Naive thymus-derived CD4-positive, alpha-beta T cell (primary cell): ENCODE measurements at regions of chr16 and their contacts with region 1.

Region 1: DNA sequence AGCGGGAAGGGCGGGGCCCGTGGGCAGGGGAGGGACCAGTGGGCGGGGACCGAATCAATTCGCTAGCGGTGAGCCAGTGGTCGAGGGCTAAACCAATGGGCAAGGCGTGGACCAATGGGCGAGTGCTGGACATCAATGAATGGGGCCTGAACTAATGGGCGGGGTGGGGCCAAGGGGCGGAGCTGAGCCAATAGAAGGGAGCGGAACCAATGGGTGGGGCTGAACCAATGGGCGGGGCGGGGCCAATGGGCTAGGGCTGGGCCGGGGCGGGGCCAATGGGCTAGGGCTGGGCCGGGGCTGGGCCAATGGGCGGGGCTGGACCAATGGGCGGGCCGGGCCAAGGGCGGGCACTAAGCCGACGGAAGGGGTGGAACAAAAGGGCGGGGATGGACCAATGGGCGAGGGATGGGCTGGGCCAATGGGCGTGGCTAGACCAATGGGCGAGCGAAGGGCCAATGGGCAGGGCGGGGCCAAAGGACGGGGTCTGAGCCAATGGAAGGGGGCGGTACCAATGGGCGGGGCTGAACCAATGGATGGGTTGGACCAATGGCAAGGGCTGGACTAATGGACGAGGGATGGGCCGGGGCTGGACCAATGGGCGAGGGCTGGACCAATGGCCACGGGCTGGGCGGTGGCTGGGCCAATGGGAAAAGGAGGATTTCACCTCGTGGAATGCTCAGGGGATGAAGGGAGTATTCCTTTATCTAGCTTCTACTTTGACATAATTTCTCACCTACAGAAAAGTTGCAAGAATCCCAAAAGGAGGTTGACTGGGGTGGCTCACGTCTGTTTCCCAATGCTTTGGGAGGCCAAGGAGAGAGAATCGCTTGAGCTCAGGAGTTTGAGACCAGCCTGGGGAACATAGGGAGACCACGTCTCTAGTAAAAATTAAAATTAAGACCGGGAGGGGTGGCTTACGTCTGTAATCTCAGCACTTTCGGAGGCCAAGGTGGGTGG is 6.0 kb upstream of the FLYWCH1 start:
- DNase-seq: peak; percentile 75 to 98 (median 78)
- ATAC-seq: peak; percentile 91
- H3K4me3 ChIP-seq: peak overlapping the region; percentile 70
- H3K4me3 Mint-ChIP-seq: peak overlapping the region; percentile 89 to 98 (median 92)
- H3K27ac ChIP-seq: peak overlapping the region; percentile 62
- H3K27ac Mint-ChIP-seq: peak overlapping the region in 7 of 9 donors; percentile 14 to 88 (median 74)
- H3K4me1 ChIP-seq: peaks cover 7 to 12% of the 10 kb centered on the region in 2 donors
- H3K4me1 Mint-ChIP-seq: peaks cover 12 to 35% (median 28%) of the 10 kb centered on the region in 7 donors
- H3K27me3 ChIP-seq: no peaks in the 10 kb centered on the region
- H3K27me3 Mint-ChIP-seq: peaks cover 0 to 8% (median 0%) of the 10 kb centered on the region in 5 donors

Region 2: DNA sequence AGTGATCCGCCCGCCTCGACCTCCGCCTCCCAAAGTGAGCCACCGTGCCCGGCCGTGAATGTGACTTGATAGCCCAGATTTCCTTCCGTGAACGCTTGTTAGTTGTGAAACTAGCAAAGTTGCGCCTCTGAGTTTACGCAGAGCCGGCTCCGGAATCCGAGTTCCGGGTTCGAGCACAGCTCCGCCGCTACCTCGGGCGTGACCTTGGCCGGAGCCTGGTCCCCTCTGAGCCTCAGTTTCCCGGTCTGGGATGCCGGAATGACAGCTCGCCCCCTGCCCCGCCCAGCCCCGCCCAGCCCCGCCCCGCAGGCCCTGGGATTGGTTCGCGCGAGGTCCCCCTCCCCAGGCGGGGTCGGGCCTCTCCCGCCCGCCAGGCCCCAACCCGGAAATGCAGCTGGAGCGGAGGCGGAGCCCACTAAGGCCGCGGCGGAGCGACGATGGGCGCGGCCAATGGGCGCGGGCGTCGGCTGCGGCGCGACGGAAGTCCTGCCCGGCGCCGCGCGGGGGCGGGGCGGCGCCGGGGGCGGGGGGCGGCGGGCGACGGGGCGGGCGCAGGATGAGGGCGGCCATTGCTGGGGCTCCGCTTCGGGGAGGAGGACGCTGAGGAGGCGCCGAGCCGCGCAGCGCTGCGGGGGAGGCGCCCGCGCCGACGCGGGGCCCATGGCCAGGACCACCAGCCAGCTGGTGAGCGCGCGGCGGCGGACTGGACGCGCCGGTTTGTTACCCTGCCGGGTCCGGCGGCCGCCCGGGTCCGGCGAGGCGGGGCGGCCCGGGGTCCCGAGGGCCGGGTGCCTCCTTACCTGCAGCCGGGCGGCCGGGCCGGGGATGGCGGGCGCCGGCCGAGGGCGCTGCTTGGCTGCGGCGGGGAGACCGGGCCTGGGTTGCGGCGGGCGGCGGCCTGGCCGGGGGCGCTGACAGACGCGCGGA is 368.0 kb before region 1 on chr16 and contains the start of gene PDPK1:
- CTCF ChIA-PET with region 1: no interaction called
- POLR2A ChIA-PET with region 1: no interaction called
- intact Hi-C with region 1: loop called (anchors 1 to 10 kb)
- DNase-seq: peak; percentile 87 to 97 (median 94)
- ATAC-seq: peak; percentile 92
- H3K4me3 ChIP-seq: peak within 1 kb of the TSS; percentile 57
- H3K4me3 Mint-ChIP-seq: peak within 1 kb of the TSS; percentile 84 to 94 (median 88)
- H3K27ac ChIP-seq: peak within 1 kb of the TSS; percentile 65
- H3K27ac Mint-ChIP-seq: peak within 1 kb of the TSS; percentile 62 to 95 (median 89)
- H3K4me1 ChIP-seq: peaks cover 0 to 14% of the 10 kb centered on the region in 2 donors
- H3K4me1 Mint-ChIP-seq: peaks cover 26 to 53% (median 43%) of the 10 kb centered on the region in 7 donors
- H3K27me3 ChIP-seq: no peaks in the 10 kb centered on the region
- H3K27me3 Mint-ChIP-seq: no peaks in the 10 kb centered on the region
- total RNA-seq, gene PDPK1: 52.2 to 71.5 (median 58.3) TPM

Region 3: GRCh38 chr16:2816751-2817339 is 88.9 kb before region 1 on chr16 and contains the start of gene PRSS21:
- CTCF ChIA-PET with region 1: no interaction called
- POLR2A ChIA-PET with region 1: no interaction called
- intact Hi-C with region 1: no loop called
- DNase-seq: peak in 6 of 9 donors; percentile 13 to 43 (median 19)
- ATAC-seq: no peak
- H3K4me3 ChIP-seq: no peak within 1 kb of the TSS
- H3K4me3 Mint-ChIP-seq: peak within 1 kb of the TSS in 3 of 10 donors; percentile 16 to 59 (median 43)
- H3K27ac ChIP-seq: no peak within 1 kb of the TSS
- H3K27ac Mint-ChIP-seq: peak within 1 kb of the TSS in 1 of 9 donors; percentile 58
- H3K4me1 ChIP-seq: no peaks in the 10 kb centered on the region
- H3K4me1 Mint-ChIP-seq: peaks cover 0 to 1% (median 0%) of the 10 kb centered on the region in 7 donors
- H3K27me3 ChIP-seq: no peaks in the 10 kb centered on the region
- H3K27me3 Mint-ChIP-seq: peaks cover 0 to 3% (median 0%) of the 10 kb centered on the region in 5 donors
- total RNA-seq, gene PRSS21: 1.1 to 7.9 (median 1.4) TPM in 4 of 5 experiments, not detected in the other

Region 4: DNA sequence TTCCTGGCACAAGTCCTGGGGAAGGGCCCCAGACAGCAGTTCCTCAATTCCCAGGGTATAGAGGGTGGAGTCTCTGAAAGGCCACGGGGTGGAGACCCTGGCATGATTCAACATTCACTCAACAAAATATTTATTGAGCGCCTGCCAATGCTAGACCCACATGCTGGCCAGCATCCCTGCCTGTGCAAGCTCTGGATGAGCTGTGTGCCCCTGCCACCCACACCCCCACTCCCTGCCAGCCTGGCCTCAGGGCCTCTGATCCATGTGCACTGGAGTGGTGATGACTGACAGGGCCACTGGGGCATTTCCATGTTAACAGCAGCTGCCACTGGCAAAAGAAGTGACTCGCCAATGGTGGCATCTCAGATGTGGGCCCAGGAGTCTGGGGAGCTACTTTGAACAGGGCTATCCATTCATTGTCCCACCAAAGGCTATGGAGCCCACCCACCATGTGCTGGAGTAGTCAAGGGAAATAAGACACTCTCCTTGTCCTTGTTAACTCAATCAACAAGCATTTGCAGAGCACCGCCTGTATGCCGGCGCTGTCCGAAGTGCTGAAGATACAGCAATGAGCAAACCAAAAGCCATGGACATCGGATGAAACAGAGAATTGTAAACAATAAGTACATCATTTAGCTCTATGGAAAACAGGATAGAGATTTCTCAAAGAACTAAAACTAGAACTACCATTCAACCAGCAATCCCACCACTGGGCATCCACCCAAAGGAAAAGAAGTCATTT is 44.7 kb before region 1 on chr16:
- CTCF ChIA-PET with region 1: no interaction called
- POLR2A ChIA-PET with region 1: no interaction called
- intact Hi-C with region 1: no loop called
- DNase-seq: no peak
- ATAC-seq: no peak
- H3K4me3 ChIP-seq: no peak overlapping the region
- H3K4me3 Mint-ChIP-seq: no peak overlapping the region
- H3K27ac ChIP-seq: no peak overlapping the region
- H3K27ac Mint-ChIP-seq: no peak overlapping the region
- H3K4me1 ChIP-seq: peaks cover 3 to 12% of the 10 kb centered on the region in 2 donors
- H3K4me1 Mint-ChIP-seq: peaks cover 3 to 10% (median 5%) of the 10 kb centered on the region in 7 donors
- H3K27me3 ChIP-seq: peaks cover 0 to 6% of the 10 kb centered on the region in 2 donors
- H3K27me3 Mint-ChIP-seq: peaks cover 5 to 16% (median 11%) of the 10 kb centered on the region in 5 donors

Region 5: DNA sequence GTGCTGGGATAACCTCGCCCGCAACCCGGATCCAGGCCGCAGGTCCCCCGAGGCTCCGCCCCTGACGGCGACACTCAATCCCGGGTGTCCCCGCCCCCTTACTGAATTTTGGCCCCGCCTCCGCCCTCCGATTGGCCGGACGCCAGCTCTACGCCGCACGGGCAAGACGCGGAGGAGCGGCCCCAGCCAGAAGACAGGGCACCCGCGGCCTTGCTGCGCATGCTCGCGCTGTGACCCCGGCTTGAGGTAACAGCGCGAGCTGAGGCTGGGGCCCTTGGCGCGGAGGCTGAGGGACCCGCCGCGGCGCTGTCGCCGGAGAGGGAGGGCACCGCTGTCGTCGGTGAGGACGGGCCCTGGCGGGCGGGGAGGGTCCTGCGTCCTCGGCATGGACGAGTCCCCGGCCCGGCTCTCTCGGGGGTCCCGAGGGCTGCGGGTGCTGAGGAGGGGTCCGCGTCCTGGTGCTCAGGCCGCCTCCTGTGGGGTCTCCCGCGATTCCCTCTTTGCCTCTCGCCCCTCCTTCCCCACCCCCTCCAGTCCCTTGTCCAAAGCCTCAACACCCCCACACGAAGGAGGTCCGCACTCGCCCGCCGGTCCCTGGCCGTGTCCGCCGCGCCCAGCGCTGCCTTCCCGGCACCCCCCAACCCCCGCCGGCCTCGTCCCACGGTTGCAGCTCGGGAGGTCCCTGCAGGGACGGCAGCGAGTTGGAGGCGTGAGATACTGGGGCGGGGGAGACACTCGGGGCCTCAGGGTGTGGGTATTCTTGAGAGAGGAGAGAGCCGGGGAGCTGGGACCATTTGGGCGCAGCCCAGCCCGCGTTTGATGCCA is 22.5 kb before region 1 on chr16 and contains the start of gene FLYWCH2:
- CTCF ChIA-PET with region 1: interaction called, 8 read pairs
- POLR2A ChIA-PET with region 1: interaction called, 37 read pairs
- intact Hi-C with region 1: loop called (anchors 1 kb)
- DNase-seq: peak; percentile 98 to 100 (median 100)
- ATAC-seq: peak; percentile 89
- H3K4me3 ChIP-seq: peak within 1 kb of the TSS; percentile 69
- H3K4me3 Mint-ChIP-seq: peak within 1 kb of the TSS; percentile 90 to 97 (median 94)
- H3K27ac ChIP-seq: peak within 1 kb of the TSS; percentile 84
- H3K27ac Mint-ChIP-seq: peak within 1 kb of the TSS; percentile 93 to 99 (median 97)
- H3K4me1 ChIP-seq: peaks cover 6% of the 10 kb centered on the region in 2 donors
- H3K4me1 Mint-ChIP-seq: peaks cover 0 to 18% (median 13%) of the 10 kb centered on the region in 7 donors
- H3K27me3 ChIP-seq: no peaks in the 10 kb centered on the region
- H3K27me3 Mint-ChIP-seq: no peaks in the 10 kb centered on the region
- total RNA-seq, gene FLYWCH2: 13.6 to 30.4 (median 24.0) TPM

Region 6: DNA sequence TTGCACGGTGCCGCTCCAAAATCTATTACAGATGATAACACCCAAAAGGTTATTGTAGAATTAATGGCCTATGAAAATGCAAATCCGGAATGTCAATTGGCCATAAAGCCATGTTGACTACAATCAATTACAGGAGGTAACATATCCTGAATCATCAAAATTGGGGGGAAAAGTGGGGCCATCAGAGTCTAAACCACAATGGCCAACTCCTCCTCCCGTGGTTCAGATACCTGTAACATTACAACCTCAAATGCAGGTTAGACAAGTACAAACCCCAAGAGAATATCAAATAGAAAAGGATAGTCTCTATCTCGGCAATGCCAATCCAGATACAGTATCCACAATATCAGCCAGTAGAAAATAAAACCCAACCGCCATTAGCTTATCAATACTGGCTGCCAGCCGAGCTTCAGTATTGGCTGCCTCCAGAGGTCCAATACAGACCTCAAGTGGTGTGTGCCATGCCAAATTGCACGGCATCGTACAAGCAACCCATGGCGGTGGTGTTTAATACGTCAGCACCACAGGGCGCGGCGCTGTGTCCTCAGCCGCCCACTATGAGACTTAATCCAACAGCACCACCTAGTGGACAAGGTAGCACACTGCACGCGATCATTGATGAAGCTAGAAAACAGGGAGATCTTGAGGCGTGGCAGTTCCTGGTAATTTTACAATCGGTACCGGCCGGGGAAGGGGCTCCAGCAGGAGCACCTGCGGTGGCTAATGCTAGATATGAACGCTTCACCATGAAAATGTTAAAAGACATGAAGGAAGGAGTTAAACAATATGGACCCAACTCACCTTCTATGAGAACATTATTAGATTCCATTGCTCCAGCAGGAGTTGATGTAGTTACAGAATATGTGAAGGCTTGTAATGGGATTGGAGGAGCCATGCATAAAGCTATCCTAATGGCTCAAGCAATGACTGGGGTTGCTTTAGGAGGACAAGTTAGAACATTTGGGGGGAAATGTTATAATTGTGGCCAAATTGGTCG is 21.2 kb after region 1 on chr16:
- CTCF ChIA-PET with region 1: interaction called, 5 read pairs
- POLR2A ChIA-PET with region 1: no interaction called
- intact Hi-C with region 1: loop called (anchors 1 kb)
- DNase-seq: peak; percentile 64 to 91 (median 84)
- ATAC-seq: peak; percentile 100
- H3K4me3 ChIP-seq: no peak overlapping the region
- H3K4me3 Mint-ChIP-seq: peak overlapping the region in 7 of 10 donors; percentile 0 to 48 (median 29)
- H3K27ac ChIP-seq: no peak overlapping the region
- H3K27ac Mint-ChIP-seq: peak overlapping the region in 7 of 9 donors; percentile 0 to 63 (median 48)
- H3K4me1 ChIP-seq: peaks cover 5 to 10% of the 10 kb centered on the region in 2 donors
- H3K4me1 Mint-ChIP-seq: peaks cover 9 to 19% (median 16%) of the 10 kb centered on the region in 7 donors
- H3K27me3 ChIP-seq: no peaks in the 10 kb centered on the region
- H3K27me3 Mint-ChIP-seq: no peaks in the 10 kb centered on the region